GM12878 (cell line): ENCODE measurements at regions of chr3 and their contacts with region 1.

Region 1: GRCh38 chr3:149575961-149576564 is 81.8 kb downstream of the WWTR1 start:
- DNase-seq: no peak
- ATAC-seq: peak; percentile 51
- H3K4me3 ChIP-seq: peak overlapping the region; percentile 10; the same call in 1 of the 2 replicates
- H3K27ac ChIP-seq: peak overlapping the region; percentile 70
- H3K4me1 ChIP-seq: peaks cover 59% of the 10 kb centered on the region
- H3K27me3 ChIP-seq: no peaks in the 10 kb centered on the region
- CTCF ChIP-seq: no peak
- EP300 ChIP-seq: 0 out of 4 replicates have a peak, but pooled peaks of 1 of the 2 experiments have one; percentile 35
- POLR2A ChIP-seq: no peak
- RAD21 ChIP-seq: no peak

Region 2: GRCh38 chr3:148309390-148310035 is 1266.5 kb before region 1 on chr3:
- CTCF ChIA-PET with region 1: no interaction called
- POLR2A ChIA-PET with region 1: no interaction called
- RAD21 ChIA-PET with region 1: no interaction called
- SMC1A ChIA-PET with region 1: no interaction called
- in situ Hi-C with region 1: loop called (anchors 25 kb)
- intact Hi-C with region 1: no loop called
- DNase-seq: no peak
- ATAC-seq: peak; percentile 63
- H3K4me3 ChIP-seq: no peak overlapping the region
- H3K27ac ChIP-seq: no peak overlapping the region
- H3K4me1 ChIP-seq: no peaks in the 10 kb centered on the region
- H3K27me3 ChIP-seq: no peaks in the 10 kb centered on the region
- CTCF ChIP-seq: peak; percentile 54 to 61 (median 54); a peak in 5 of 6 replicates
- EP300 ChIP-seq: no peak
- POLR2A ChIP-seq: no peak
- RAD21 ChIP-seq: peak; percentile 85

Region 3: DNA sequence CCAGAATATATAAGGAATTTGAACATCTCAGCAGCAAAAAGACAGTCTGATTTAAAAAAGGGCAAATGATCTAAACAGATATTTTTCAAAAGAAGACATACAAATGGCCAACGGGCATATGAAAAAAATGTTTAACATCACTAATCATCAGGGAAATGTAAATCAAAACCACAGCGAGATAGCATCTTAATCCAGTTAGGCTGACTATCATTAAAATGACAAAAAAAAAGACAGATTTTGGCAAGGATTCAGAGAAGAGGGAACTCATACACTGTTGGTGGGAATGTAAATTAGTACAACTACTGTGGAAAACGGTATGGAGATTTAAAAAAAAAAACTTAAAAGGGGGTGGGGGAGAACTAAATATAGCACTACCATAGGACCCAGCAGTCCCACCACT is 284.8 kb after region 1 on chr3:
- CTCF ChIA-PET with region 1: no interaction called
- POLR2A ChIA-PET with region 1: no interaction called
- RAD21 ChIA-PET with region 1: no interaction called
- SMC1A ChIA-PET with region 1: no interaction called
- in situ Hi-C with region 1: no loop called
- intact Hi-C with region 1: no loop called
- DNase-seq: no peak
- ATAC-seq: no peak
- H3K4me3 ChIP-seq: no peak overlapping the region
- H3K27ac ChIP-seq: no peak overlapping the region
- H3K4me1 ChIP-seq: no peaks in the 10 kb centered on the region
- H3K27me3 ChIP-seq: no peaks in the 10 kb centered on the region
- CTCF ChIP-seq: no peak
- EP300 ChIP-seq: no peak
- POLR2A ChIP-seq: no peak
- RAD21 ChIP-seq: no peak